ENCODE measurements at regions of chr15 and their contacts with region 1.

Region 1: GRCh38 chr15:68078365-68078764 is 24.2 kb downstream of the PIAS1 start:
- DNase-seq: no peak
- ATAC-seq: peak; percentile 33

Region 2: GRCh38 chr15:67998599-67999122 is 79.7 kb before region 1 on chr15:
- intact Hi-C with region 1: no loop called
- DNase-seq: peak; percentile 31
- ATAC-seq: no peak

Region 3: DNA sequence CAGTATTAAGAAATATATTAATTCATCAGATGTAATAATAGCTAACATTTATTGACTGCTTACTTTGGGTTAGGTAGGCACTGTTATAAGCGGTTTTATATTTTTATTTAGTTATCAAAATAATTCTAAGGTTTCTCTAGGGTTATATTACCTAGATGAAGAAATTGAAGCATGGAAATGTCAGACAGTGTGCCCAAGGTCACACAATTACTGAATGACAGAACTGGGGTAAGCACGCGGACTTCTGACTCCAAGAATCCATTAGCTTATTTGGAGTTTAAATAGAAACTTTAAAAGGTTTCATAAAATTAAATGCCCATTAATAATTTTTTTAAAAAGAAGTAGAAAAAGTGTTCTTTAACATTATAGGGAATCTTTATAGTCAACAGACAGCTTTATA is 52.5 kb after region 1 on chr15:
- intact Hi-C with region 1: loop called (anchors 10 kb)
- DNase-seq: no peak
- ATAC-seq: peak; percentile 50

Region 4: DNA sequence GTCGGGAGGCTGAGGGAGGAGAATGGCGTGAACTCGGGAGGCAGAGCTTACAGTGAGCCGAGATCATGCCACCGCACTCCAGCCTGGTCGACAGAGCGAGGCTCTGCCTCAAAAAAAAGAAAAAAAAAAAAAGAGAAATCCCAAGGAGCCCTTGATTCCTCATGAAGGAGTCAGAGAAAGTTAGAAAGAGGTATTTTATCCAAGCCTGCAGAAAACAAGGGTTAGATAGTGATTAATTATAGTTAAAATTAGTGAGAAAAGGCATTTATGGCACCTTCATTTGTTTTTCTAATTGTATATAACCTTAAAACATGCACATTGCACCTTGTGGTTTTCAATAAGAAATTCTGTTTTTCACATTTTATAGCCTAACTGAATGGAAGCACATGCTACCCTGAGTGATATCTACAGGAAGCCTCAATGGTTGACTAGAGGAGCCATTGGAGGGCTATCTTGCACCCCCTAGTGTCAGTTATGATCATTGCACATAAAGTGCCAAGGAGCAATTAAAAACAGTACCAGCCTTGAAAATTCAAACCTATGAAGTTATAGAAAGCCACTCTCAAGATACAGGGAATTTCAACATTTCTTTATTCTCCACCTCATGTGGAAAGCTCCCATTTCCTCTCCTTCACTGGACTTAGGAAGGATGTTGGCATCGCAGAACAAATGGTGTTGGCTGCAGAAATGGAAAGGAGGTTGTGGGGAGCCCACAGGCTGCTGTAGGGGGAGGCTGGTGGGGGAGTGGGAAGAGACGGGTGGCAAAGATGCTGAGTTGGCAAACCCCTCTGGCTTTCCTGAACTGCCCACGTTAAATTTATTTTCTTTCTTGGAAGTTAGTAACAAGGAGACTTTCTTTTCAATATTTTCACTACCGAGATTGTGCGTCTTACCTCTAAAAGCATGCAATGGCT is 305.1 kb after region 1 on chr15:
- intact Hi-C with region 1: no loop called
- DNase-seq: no peak
- ATAC-seq: peak; percentile 72